ENCODE measurements at regions of chr7 and their contacts with region 1.

Region 1: GRCh38 chr7:55438757-55439525 is 73.8 kb downstream of the LANCL2 start:
- DNase-seq: no peak
- ATAC-seq: peak; percentile 41
- H3K4me3 ChIP-seq: no peak overlapping the region
- H3K4me3 Mint-ChIP-seq: no peak overlapping the region
- H3K27ac ChIP-seq: no peak overlapping the region
- H3K27ac Mint-ChIP-seq: peak overlapping the region; percentile 28
- H3K4me1 ChIP-seq: peaks cover 43% of the 10 kb centered on the region
- H3K4me1 Mint-ChIP-seq: peaks cover 45% of the 10 kb centered on the region
- H3K27me3 ChIP-seq: no peaks in the 10 kb centered on the region
- H3K27me3 Mint-ChIP-seq: no peaks in the 10 kb centered on the region
- CTCF ChIP-seq: no peak

Region 2: DNA sequence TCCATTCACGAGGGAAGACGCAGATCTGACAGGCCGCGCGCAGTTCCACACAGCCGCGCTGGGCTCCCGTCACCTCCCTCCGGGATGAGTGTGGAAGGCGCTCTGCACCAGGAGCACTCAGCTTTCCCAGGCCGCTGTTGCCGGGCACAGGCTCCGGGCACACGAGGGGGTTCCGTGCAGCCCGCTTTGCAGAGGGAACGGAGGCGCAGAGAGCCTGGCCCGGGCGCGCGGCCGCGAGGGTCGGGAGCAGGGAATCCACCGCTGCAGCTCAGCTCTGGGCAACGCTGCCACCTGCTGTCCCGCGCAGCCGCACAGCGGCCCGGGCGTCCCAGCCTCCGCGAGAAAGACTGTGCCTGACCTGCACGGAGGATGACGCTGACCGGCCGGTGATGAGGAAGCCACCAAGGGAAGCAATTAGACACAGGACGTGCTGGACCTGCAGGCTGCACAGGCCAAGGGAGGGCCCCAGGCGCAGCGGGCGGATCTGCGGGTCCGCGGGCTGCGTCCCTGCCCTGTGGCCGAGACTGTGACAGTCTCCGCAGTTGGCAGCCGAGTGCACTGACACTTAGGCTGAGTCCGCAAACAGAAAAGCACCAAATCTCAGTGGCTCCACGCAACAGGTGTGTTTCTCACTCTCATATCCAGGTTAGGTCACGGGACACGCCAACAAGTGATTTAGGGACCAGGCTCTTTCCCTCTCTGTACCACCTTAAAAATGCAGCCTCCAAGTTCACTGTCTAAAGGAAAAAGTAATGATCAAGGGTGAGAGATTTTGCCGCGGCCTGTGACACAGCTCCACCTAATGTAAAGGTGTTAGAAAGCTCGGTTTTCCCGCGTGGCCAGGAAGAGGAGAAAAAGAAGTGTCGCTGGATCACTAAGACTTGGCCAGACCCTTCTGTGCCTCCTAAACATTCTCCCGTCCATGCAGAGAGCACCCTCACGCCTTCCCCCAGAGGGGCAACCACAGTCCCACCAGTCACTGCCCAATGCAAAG is 774.4 kb before region 1 on chr7:
- CTCF ChIA-PET with region 1: no interaction called
- POLR2A ChIA-PET with region 1: no interaction called
- intact Hi-C with region 1: no loop called
- DNase-seq: no peak
- ATAC-seq: no peak
- H3K4me3 ChIP-seq: no peak overlapping the region
- H3K4me3 Mint-ChIP-seq: no peak overlapping the region
- H3K27ac ChIP-seq: no peak overlapping the region
- H3K27ac Mint-ChIP-seq: no peak overlapping the region
- H3K4me1 ChIP-seq: no peaks in the 10 kb centered on the region
- H3K4me1 Mint-ChIP-seq: peaks cover 17% of the 10 kb centered on the region
- H3K27me3 ChIP-seq: peaks cover 7 to 20% of the 10 kb centered on the region in 2 experiments
- H3K27me3 Mint-ChIP-seq: peaks cover 31% of the 10 kb centered on the region
- CTCF ChIP-seq: no peak

Region 3: DNA sequence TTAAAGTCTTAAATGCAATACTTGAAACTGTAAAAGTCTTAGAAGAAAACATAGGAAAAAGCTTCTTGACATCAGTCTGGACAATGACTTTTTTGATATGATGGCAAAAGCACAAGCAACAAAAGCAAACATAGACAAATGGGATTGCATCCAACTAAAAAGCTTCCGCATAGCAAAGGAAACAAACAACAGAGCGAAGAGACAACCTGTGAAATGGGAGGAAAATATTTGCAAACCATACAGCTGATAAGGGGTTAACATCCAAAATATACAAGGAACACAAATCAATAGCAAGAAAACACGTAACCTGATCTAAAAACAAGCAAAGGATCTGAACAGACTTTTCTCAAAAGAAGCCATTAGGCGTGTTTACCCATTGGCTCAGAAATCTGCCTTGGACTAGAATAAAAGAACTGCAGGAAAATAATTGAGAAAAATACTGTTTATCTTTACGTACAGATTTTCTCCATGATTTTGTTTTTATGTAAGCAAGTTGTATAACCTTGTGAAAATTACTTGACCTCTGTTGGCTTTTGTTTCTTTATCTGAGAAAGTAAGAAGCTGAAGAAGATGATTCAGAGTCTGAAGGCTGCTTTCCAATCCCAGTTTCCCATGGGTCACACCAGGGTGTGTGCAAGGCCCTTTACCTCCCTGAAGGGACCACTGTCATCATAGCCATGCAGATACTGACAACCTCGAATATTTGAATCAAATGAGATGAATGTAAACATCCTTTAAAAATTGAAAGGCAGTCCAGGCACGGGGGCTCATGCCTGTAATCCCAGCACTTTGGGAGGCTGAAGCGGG is 172.9 kb before region 1 on chr7:
- CTCF ChIA-PET with region 1: no interaction called
- POLR2A ChIA-PET with region 1: no interaction called
- intact Hi-C with region 1: no loop called
- DNase-seq: no peak
- ATAC-seq: no peak
- H3K4me3 ChIP-seq: no peak overlapping the region
- H3K4me3 Mint-ChIP-seq: no peak overlapping the region
- H3K27ac ChIP-seq: no peak overlapping the region
- H3K27ac Mint-ChIP-seq: no peak overlapping the region
- H3K4me1 ChIP-seq: no peaks in the 10 kb centered on the region
- H3K4me1 Mint-ChIP-seq: no peaks in the 10 kb centered on the region
- H3K27me3 ChIP-seq: peaks cover 0 to 3% of the 10 kb centered on the region in 2 experiments
- H3K27me3 Mint-ChIP-seq: peaks cover 13% of the 10 kb centered on the region
- CTCF ChIP-seq: no peak

Region 4: DNA sequence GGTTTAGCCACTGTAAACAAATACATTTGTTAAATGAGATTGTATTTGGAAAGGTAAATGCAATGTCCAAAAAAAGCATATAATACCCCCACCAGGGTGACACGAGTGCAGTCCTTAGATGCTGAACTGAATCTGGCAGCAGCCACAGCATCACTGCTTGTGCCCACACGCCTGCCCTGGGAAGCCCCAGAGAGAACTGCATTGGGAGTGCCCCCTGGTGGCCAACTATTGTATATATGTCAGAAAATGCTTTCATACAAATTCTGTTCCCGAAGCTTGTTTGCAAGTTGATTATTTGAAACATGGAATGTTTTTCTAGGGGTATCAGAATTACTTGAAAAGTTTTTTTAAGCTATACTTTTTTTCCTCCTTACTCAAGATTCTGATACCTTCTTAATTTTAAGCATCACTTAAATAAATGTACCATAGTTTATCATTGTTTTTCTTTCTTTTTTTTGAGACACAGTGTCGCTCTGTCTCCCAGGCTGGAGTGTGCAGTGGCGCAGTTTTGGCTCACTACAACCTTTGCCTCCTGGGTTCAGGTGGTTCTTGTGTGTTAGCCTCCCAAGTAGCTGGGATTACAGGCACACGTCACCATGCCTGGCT is 23.7 kb before region 1 on chr7:
- CTCF ChIA-PET with region 1: no interaction called
- POLR2A ChIA-PET with region 1: no interaction called
- intact Hi-C with region 1: no loop called
- DNase-seq: peak; percentile 62 to 88 (median 78)
- ATAC-seq: peak; percentile 99
- H3K4me3 ChIP-seq: no peak overlapping the region
- H3K4me3 Mint-ChIP-seq: no peak overlapping the region
- H3K27ac ChIP-seq: no peak overlapping the region
- H3K27ac Mint-ChIP-seq: no peak overlapping the region
- H3K4me1 ChIP-seq: no peaks in the 10 kb centered on the region
- H3K4me1 Mint-ChIP-seq: no peaks in the 10 kb centered on the region
- H3K27me3 ChIP-seq: no peaks in the 10 kb centered on the region
- H3K27me3 Mint-ChIP-seq: no peaks in the 10 kb centered on the region
- CTCF ChIP-seq: peak; percentile 95

Region 5: GRCh38 chr7:55498142-55498541 is 59.2 kb after region 1 on chr7:
- CTCF ChIA-PET with region 1: no interaction called
- POLR2A ChIA-PET with region 1: no interaction called
- intact Hi-C with region 1: loop called (anchors 5 to 10 kb)
- DNase-seq: peak in 5 of 14 experiments; percentile 19 to 65 (median 30)
- ATAC-seq: peak; percentile 83
- H3K4me3 ChIP-seq: no peak overlapping the region
- H3K4me3 Mint-ChIP-seq: no peak overlapping the region
- H3K27ac ChIP-seq: peak overlapping the region in 1 of 2 donors; percentile 26
- H3K27ac Mint-ChIP-seq: peak overlapping the region; percentile 85
- H3K4me1 ChIP-seq: peaks cover 36% of the 10 kb centered on the region
- H3K4me1 Mint-ChIP-seq: peaks cover 75% of the 10 kb centered on the region
- H3K27me3 ChIP-seq: no peaks in the 10 kb centered on the region
- H3K27me3 Mint-ChIP-seq: no peaks in the 10 kb centered on the region
- CTCF ChIP-seq: no peak

Region 6: GRCh38 chr7:55515569-55516279 is 76.8 kb after region 1 on chr7:
- CTCF ChIA-PET with region 1: no interaction called
- POLR2A ChIA-PET with region 1: no interaction called
- intact Hi-C with region 1: loop called in 1 of 2 experiments (anchors 5 kb)
- DNase-seq: peak in 1 of 14 experiments; percentile 15
- ATAC-seq: no peak
- H3K4me3 ChIP-seq: no peak overlapping the region
- H3K4me3 Mint-ChIP-seq: peak overlapping the region; percentile 18
- H3K27ac ChIP-seq: no peak overlapping the region
- H3K27ac Mint-ChIP-seq: peak overlapping the region; percentile 67
- H3K4me1 ChIP-seq: peaks cover 52% of the 10 kb centered on the region
- H3K4me1 Mint-ChIP-seq: peaks cover 68% of the 10 kb centered on the region
- H3K27me3 ChIP-seq: no peaks in the 10 kb centered on the region
- H3K27me3 Mint-ChIP-seq: no peaks in the 10 kb centered on the region
- CTCF ChIP-seq: no peak